Right cardiac atrium (tissue), 5 donors: ENCODE measurements at regions of chr3 and their contacts with region 1.

Region 1: DNA sequence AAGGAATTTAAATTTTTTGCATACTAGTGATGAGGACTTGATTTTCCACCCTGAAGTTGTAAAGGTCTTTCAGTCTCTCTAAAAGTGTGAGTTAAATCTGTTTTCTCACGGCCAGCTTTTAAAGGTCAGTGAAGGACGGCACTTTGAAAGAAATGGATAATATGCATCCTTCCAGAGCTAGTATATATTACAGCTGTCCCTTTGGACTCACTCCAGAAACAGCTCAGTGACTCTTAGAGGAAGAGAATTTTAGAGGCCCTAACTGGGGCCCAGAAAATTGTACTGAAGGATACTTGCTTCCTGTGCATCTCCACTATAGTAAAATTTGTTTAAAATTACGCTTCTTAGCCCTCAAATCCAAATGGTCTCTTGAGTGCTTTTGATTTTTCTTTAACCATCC is 41.6 kb downstream of the PIK3CA start:
- DNase-seq: no peak
- ATAC-seq: peak in 1 of 2 donors; percentile 41
- H3K4me3 ChIP-seq: no peak overlapping the region
- H3K27ac ChIP-seq: no peak overlapping the region
- H3K4me1 ChIP-seq: peaks cover 3% of the 10 kb centered on the region
- H3K27me3 ChIP-seq: no peaks in the 10 kb centered on the region

Region 2: DNA sequence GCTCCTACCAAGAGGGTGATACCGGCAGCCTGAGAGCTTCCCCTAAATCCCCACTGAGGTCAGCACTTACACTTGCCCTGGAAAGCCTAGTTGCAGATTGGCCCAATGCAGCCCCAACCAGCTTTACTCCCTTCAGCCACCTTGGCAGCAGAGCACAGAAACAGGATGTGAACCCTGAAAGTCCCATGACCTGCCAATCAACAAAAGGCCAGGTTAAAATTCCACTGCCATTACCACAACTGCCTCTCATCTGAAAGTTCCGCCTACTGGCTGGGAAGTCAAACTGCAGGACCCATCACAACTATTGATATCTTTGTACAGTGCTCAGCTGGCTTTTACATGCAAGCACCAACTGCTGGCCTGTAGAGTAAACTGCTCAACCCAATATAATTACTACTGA is 274.4 kb before region 1 on chr3:
- intact Hi-C with region 1: no loop called
- DNase-seq: no peak
- ATAC-seq: no peak
- H3K4me3 ChIP-seq: no peak overlapping the region
- H3K27ac ChIP-seq: no peak overlapping the region
- H3K4me1 ChIP-seq: no peaks in the 10 kb centered on the region
- H3K27me3 ChIP-seq: no peaks in the 10 kb centered on the region

Region 3: GRCh38 chr3:179147873-179148615 is 41.7 kb before region 1 on chr3 and contains the start of gene PIK3CA:
- intact Hi-C with region 1: loop called in 1 of 4 experiments (anchors 5 kb)
- DNase-seq: peak; percentile 96
- ATAC-seq: peak; percentile 98
- H3K4me3 ChIP-seq: peak within 1 kb of the TSS; percentile 95
- H3K27ac ChIP-seq: peak within 1 kb of the TSS; percentile 91
- H3K4me1 ChIP-seq: no peaks in the 10 kb centered on the region
- H3K27me3 ChIP-seq: no peaks in the 10 kb centered on the region
- total RNA-seq, gene PIK3CA: 20.7 to 22.3 (median 21.7) TPM

Region 4: DNA sequence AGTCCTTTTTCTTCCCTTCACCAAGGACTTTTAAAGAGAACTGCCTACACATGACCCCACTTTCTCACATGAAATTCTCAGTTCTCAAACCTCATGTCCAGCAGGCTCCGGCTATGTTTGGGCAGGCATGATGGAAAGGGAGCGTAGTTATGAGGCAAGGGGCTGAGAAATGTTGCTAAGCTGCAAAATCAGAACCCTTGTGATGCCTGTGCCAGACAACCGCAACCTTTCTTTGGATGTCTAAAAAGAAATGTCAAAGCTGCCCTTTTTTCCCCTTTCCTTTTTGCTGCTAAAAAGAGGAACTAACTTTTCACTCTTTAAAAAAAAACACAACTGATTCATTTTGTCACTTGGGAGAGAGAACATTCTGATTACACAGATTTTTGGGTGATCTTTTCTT is 242.3 kb after region 1 on chr3:
- intact Hi-C with region 1: no loop called
- DNase-seq: no peak
- ATAC-seq: peak; percentile 29 to 55
- H3K4me3 ChIP-seq: no peak overlapping the region
- H3K27ac ChIP-seq: no peak overlapping the region
- H3K4me1 ChIP-seq: peaks cover 3% of the 10 kb centered on the region
- H3K27me3 ChIP-seq: no peaks in the 10 kb centered on the region